ENCODE measurements at regions of chr1 and their contacts with region 1.

Region 1: DNA sequence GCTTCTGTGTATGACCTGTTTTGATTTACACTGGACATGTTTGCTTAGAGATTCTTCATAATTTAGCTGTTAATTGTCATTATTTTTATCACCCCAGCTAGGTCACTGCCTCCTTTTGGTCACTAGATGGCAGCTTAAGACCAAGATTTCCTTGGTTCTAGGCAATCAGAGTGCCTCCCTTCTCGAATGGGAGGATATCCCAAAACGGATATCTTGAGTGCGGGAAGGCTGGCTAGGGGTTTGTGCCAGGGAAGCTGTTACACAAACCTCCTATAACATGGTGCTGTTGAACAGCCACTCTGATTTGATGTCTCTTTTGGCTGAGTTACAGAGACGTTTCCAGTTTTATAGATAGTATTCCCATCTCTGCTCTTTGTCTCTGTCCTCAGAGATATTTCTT is 283.5 kb downstream of the S1PR1 start:
- DNase-seq: peak; percentile 27
- ATAC-seq: peak; percentile 86
- H3K4me3 ChIP-seq: no peak overlapping the region
- H3K27ac ChIP-seq: no peak overlapping the region
- H3K4me1 ChIP-seq: no peaks in the 10 kb centered on the region
- H3K27me3 ChIP-seq: no peaks in the 10 kb centered on the region
- CTCF ChIP-seq: peak; percentile 75
- EP300 ChIP-seq: no peak
- POLR2A ChIP-seq: no peak
- RAD21 ChIP-seq: peak; percentile 14; the same call in 1 of the 2 replicates

Region 2: GRCh38 chr1:101540161-101540560 is 19.9 kb after region 1 on chr1:
- CTCF ChIA-PET with region 1: no interaction called
- POLR2A ChIA-PET with region 1: no interaction called
- in situ Hi-C with region 1: no loop called
- intact Hi-C with region 1: no loop called
- DNase-seq: no peak
- ATAC-seq: no peak
- H3K4me3 ChIP-seq: no peak overlapping the region
- H3K27ac ChIP-seq: no peak overlapping the region
- H3K4me1 ChIP-seq: no peaks in the 10 kb centered on the region
- H3K27me3 ChIP-seq: no peaks in the 10 kb centered on the region
- CTCF ChIP-seq: no peak
- EP300 ChIP-seq: no peak
- POLR2A ChIP-seq: no peak
- RAD21 ChIP-seq: no peak

Region 3: GRCh38 chr1:102434421-102434820 is 914.1 kb after region 1 on chr1:
- CTCF ChIA-PET with region 1: no interaction called
- POLR2A ChIA-PET with region 1: no interaction called
- in situ Hi-C with region 1: loop called (anchors 25 kb)
- intact Hi-C with region 1: loop called (anchors 2 kb)
- DNase-seq: peak; percentile 52
- ATAC-seq: peak; percentile 88
- H3K4me3 ChIP-seq: no peak overlapping the region
- H3K27ac ChIP-seq: no peak overlapping the region
- H3K4me1 ChIP-seq: no peaks in the 10 kb centered on the region
- H3K27me3 ChIP-seq: no peaks in the 10 kb centered on the region
- CTCF ChIP-seq: peak; percentile 82
- EP300 ChIP-seq: no peak
- POLR2A ChIP-seq: no peak
- RAD21 ChIP-seq: 0 out of 2 replicates have a peak, but pooled peaks have one; percentile 20

Region 4: DNA sequence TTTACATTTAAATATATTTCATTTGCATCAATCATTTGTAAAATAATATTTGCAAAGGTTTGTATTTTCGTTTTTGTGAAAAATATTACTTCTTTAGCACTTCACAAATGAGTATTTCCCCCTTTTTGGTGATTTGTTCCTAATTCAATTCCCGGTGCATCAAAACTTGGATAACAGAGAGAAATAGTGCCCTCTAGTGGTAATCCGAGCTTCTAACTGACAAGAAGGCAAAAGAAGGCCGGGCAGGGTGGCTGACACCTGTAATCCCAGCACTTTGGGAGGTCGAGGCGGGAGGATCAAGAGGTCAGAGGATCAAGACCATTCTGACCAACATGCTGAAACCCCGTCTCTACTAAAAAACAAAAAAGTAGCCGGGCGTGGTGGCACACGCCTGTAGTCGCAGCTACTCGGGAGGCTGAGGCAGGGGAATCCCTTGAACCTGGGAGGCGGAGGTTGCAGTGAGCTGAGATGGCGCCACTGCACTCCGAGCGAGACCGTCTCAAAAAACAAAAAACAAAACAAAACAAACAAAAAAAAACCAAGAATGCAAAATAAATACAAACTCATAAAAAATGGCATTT is 1450.3 kb after region 1 on chr1:
- CTCF ChIA-PET with region 1: interaction called, 4 read pairs
- POLR2A ChIA-PET with region 1: no interaction called
- in situ Hi-C with region 1: loop called (anchors 25 kb)
- intact Hi-C with region 1: no loop called
- DNase-seq: peak; percentile 57
- ATAC-seq: peak; percentile 59; the same call in 2 of the 3 replicates
- H3K4me3 ChIP-seq: no peak overlapping the region
- H3K27ac ChIP-seq: no peak overlapping the region
- H3K4me1 ChIP-seq: no peaks in the 10 kb centered on the region
- H3K27me3 ChIP-seq: no peaks in the 10 kb centered on the region
- CTCF ChIP-seq: peak; percentile 65
- EP300 ChIP-seq: no peak
- POLR2A ChIP-seq: no peak
- RAD21 ChIP-seq: no peak

Region 5: DNA sequence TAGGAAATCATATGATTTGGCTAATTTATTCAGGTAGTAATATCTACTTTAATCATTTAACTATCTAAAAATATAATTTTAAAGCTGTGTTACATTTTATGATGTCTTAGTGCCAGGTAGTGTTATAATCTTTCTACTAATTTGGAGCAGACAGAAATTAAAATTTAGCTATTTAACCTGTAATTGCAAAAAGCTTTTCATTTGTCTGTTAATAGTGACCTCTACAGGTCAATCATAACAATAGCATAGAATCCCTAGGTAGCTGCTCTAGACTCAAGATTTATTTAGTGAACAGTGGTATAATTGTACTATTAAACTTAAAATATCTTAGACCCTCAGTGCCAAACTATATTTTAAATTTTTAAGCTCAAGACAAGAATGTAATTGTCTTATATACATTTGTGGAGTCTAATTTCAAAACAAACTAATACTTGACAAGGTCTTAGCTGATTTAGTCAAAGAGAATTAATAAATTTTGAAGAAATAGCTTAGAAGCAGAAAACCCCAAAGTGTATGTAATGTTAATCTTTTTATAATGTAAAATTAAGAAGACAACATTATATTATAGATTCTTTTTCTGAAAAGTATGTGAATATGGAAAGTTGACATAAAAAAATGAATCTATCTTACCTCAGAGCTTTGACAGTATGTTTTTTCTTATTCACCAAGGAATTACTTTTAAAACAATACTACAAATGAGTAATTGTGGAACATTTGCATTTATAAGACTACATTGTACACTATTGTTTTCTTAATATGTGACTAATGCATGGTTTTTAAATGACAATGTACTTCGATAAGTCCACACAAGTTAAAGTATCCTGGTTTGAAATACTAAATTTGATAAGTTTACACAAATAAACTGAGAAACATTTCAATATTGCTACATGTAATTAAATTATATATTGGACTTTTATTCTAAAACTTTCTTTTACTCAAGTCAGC is 1941.1 kb after region 1 on chr1:
- CTCF ChIA-PET with region 1: no interaction called
- POLR2A ChIA-PET with region 1: no interaction called
- in situ Hi-C with region 1: loop called (anchors 25 kb)
- intact Hi-C with region 1: no loop called
- DNase-seq: no peak
- ATAC-seq: no peak
- H3K4me3 ChIP-seq: no peak overlapping the region
- H3K27ac ChIP-seq: no peak overlapping the region
- H3K4me1 ChIP-seq: no peaks in the 10 kb centered on the region
- H3K27me3 ChIP-seq: no peaks in the 10 kb centered on the region
- CTCF ChIP-seq: peak; percentile 44
- EP300 ChIP-seq: no peak
- POLR2A ChIP-seq: no peak
- RAD21 ChIP-seq: no peak